Activated T-helper 1 cell treated with anti-CD3 and anti-CD28 coated beads, Interleukin-12 subunit alpha, Interleukin-12 subunit beta, Interleukin-2, Interleukin-4 antibody, amounts not matched to agents 30 ng/mL and 10 ng/mL and 1 ng/mL, durations not matched to agents 14 hours and 24 hours and 36 hours (primary cell): ENCODE measurements at regions of chrX and their contacts with region 1.

Region 1: GRCh38 chrX:78979789-78980464 is 34.7 kb downstream of the P2RY10 start:
- DNase-seq: no peak
- H3K4me3 Mint-ChIP-seq: peak overlapping the region; percentile 67
- H3K27ac Mint-ChIP-seq: peak overlapping the region; percentile 100
- H3K4me1 Mint-ChIP-seq: peaks cover 35% of the 10 kb centered on the region
- H3K27me3 Mint-ChIP-seq: no peaks in the 10 kb centered on the region

Region 2: DNA sequence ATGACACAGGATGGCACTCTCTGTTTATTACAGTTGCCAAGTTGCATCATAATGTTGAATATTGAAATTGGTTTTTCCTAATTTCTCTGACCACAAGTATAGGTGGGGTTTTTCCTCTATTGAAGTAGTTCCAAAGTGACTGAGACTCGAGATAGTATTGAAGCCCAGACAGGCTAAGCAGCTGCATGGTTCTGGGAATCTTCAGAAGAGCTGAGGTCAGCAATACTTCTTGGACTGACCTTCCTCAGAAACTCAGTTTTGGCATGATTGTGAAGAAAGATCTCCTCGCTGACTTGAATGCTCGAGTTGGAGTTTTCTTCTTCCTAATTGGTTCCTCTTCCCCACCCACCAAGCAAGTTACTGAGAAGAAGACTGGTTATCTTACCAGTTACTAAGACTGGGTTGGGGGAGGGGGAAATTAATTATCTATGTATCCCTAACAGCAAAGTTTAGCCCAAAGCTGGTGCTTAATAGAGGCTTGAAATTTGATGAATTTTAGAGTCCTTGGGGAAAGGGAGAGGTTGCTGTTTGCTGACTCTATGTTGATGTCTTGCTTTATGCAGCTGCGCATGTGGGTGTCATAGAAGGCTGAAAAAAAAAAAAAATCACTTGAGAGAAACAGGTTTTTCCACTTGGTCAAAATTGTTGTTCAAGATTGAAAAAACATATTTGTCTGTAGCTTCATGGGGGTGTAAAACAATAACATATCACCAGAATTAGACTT is 56.4 kb after region 1 on chrX:
- intact Hi-C with region 1: no loop called
- DNase-seq: no peak
- H3K4me3 Mint-ChIP-seq: no peak overlapping the region
- H3K27ac Mint-ChIP-seq: no peak overlapping the region
- H3K4me1 Mint-ChIP-seq: peaks cover 26% of the 10 kb centered on the region
- H3K27me3 Mint-ChIP-seq: no peaks in the 10 kb centered on the region

Region 3: GRCh38 chrX:79153348-79153747 is 173.4 kb after region 1 on chrX:
- intact Hi-C with region 1: loop called (anchors 2 kb)
- DNase-seq: no peak
- H3K4me3 Mint-ChIP-seq: peak overlapping the region; percentile 73
- H3K27ac Mint-ChIP-seq: peak overlapping the region; percentile 85
- H3K4me1 Mint-ChIP-seq: peaks cover 82% of the 10 kb centered on the region
- H3K27me3 Mint-ChIP-seq: no peaks in the 10 kb centered on the region